ENCODE measurements at regions of chr5 and their contacts with region 1.

Region 1: GRCh38 chr5:139787568-139788293 is 7.9 kb upstream of the PSD2 start:
- DNase-seq: peak; percentile 70
- H3K4me3 Mint-ChIP-seq: peak overlapping the region; percentile 82
- H3K27ac Mint-ChIP-seq: no peak overlapping the region
- H3K4me1 Mint-ChIP-seq: no peaks in the 10 kb centered on the region
- H3K27me3 Mint-ChIP-seq: peaks cover 32% of the 10 kb centered on the region

Region 2: DNA sequence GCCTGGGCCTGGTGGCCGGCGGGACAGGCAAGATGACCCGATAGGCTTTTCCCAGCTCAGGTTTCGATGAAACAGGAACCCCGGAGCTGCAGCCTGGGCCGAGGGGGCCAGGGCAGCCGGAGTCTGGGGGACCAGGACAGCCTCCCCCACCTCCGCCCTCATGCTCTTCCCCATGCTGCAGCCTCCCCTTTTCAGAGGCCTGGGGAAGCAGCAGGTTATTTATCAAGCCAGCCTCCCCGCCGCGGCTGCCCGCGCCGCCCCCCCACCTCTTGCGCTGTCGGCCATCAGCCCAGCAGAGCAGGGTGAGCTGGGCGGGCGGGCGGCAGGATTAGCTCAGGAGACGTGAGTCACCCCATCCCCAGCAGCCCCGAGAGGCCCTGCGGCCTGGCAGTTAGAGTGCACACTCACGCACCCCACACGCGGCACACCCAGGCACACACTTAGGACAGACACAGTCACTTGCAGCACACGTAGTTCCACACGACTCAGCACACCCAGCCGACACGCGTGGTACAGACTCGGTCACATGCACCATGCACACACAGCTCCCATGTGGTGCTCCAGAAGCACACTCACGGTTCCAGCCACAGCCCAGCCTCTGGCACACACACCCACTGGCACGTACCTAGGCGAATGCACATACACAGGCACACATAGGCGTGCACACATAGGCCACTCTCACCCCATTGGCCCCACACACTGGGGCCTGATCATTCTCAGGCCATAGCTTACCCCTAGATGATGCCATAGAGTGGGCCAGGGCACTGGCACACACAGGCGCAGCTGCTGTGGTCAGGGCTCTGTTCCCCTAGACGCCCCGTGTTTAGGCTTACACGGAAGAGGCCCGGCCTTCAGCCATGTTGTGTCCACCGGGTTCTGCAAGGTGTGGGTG is 126.6 kb before region 1 on chr5:
- intact Hi-C with region 1: no loop called
- DNase-seq: no peak
- H3K4me3 Mint-ChIP-seq: no peak overlapping the region
- H3K27ac Mint-ChIP-seq: no peak overlapping the region
- H3K4me1 Mint-ChIP-seq: peaks cover 12% of the 10 kb centered on the region
- H3K27me3 Mint-ChIP-seq: peaks cover 4% of the 10 kb centered on the region

Region 3: GRCh38 chr5:139774980-139775661 is 12.6 kb before region 1 on chr5:
- intact Hi-C with region 1: loop called (anchors 1 kb)
- DNase-seq: peak; percentile 61
- H3K4me3 Mint-ChIP-seq: no peak overlapping the region
- H3K27ac Mint-ChIP-seq: no peak overlapping the region
- H3K4me1 Mint-ChIP-seq: no peaks in the 10 kb centered on the region
- H3K27me3 Mint-ChIP-seq: peaks cover 20% of the 10 kb centered on the region

Region 4: DNA sequence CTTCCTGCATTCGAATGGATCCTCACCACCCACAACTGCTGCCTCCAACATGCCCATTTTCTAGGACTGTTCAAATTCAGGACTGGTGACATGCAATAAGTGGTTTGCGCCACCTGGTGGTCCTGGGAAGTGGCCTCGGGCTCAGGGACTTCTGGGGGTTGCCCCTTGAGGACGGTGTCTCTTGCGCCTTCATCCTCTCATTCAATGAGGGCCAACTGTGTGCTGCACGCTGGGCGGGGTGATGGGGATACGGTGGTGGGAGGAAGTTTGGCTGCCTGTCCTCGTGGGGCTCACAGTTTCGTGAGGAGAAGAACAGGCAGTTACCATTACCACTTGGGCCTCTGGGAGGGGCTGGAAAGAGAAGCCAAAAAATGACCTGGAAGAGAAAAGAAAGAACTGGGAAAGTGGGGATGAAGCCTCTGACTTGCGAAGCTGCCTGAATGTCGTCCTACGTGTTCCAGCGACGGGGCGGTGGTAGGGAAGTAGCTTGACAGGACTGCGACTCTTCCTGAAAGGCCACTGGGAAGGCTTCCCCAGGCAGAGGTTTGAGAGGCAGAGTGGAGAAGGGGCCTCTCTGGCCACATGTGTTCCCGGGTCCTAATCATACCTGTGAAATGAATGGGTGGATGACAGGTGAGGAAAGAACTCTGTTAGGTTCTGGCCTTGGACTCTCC is 56.9 kb after region 1 on chr5:
- intact Hi-C with region 1: loop called (anchors 1 kb)
- DNase-seq: peak; percentile 20
- H3K4me3 Mint-ChIP-seq: no peak overlapping the region
- H3K27ac Mint-ChIP-seq: no peak overlapping the region
- H3K4me1 Mint-ChIP-seq: peaks cover 8% of the 10 kb centered on the region
- H3K27me3 Mint-ChIP-seq: peaks cover 44% of the 10 kb centered on the region

Region 5: GRCh38 chr5:139863855-139864558 is 76.3 kb after region 1 on chr5:
- intact Hi-C with region 1: loop called (anchors 1 kb)
- DNase-seq: peak; percentile 7
- H3K4me3 Mint-ChIP-seq: no peak overlapping the region
- H3K27ac Mint-ChIP-seq: no peak overlapping the region
- H3K4me1 Mint-ChIP-seq: no peaks in the 10 kb centered on the region
- H3K27me3 Mint-ChIP-seq: peaks cover 8% of the 10 kb centered on the region

Region 6: DNA sequence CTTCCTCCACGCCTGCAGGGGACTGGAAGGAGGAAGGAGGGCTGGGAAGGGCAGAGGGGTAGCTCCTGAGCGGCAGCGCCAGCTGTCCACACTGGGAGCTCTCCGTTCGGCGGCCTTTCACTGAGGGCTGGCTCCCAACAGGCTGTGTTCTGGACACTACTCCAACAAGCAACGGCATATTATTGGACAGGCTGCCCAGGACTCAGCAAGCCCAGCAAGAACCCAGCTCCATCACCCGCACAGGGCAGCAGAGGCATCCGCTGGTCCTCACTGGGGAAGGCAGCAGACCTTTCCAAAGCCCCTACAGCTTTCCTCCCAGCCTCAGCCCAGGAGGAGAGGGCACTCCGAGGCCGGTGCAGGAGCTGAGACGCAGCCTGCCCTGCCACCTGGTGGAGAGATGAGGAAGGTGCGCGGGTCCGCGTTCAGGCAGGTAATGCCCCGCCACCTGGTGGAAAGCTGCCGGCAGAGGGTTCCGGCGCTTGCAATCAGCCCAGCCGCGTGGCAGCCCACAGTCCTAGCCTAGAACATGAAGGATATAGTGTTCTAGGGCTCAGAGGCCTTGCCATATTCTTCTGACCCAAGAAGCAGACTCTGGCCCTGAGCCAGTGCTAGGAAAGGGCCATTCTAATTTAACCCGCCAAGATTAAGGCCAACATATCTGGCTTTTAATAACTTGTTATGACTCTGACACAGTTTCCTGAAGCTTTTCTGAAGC is 181.0 kb after region 1 on chr5:
- intact Hi-C with region 1: loop called (anchors 1 kb)
- DNase-seq: peak; percentile 77
- H3K4me3 Mint-ChIP-seq: no peak overlapping the region
- H3K27ac Mint-ChIP-seq: no peak overlapping the region
- H3K4me1 Mint-ChIP-seq: no peaks in the 10 kb centered on the region
- H3K27me3 Mint-ChIP-seq: peaks cover 29% of the 10 kb centered on the region

Region 7: DNA sequence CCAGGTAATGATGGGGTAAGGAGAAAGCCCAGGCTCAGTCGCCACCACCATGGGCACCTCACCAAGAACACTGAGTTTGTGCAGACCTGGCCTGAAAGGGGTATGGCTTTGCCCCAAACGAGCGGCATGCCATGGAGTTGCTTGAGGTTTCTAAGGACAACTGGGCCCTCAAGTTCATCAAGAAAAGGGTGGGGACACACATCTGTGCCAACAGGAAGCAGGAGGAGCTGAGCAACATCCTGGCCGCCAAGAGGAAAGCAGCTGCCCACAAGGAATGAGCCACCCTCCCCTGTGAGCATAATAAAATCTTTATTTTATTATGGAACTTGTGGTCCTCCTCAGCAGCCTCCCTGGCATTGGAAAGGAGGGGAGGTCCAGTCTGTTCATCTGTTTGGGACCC is 821.4 kb after region 1 on chr5:
- intact Hi-C with region 1: no loop called
- DNase-seq: no peak
- H3K4me3 Mint-ChIP-seq: no peak overlapping the region
- H3K27ac Mint-ChIP-seq: no peak overlapping the region
- H3K4me1 Mint-ChIP-seq: peaks cover 8% of the 10 kb centered on the region
- H3K27me3 Mint-ChIP-seq: no peaks in the 10 kb centered on the region

Measured in activated T-helper 1 cell treated with anti-CD3 and anti-CD28 coated beads, Interleukin-12 subunit alpha, Interleukin-12 subunit beta, Interleukin-2, Interleukin-4 antibody, amounts not matched to agents 30 ng/mL and 10 ng/mL and 1 ng/mL, durations not matched to agents 14 hours and 24 hours and 36 hours (primary cell).